Sigmoid colon (tissue), 7 donors: ENCODE measurements at regions of chr15 and their contacts with region 1.

Region 1: GRCh38 chr15:90931737-90932659 is at the start of gene HDDC3:
- DNase-seq: peak; percentile 94
- H3K4me3 ChIP-seq: peak within 1 kb of the TSS; percentile 67 to 79 (median 74)
- H3K27ac ChIP-seq: peak within 1 kb of the TSS; percentile 85 to 92 (median 90)
- H3K4me1 ChIP-seq: peaks cover 0 to 56% (median 52%) of the 10 kb centered on the region in 4 donors
- H3K27me3 ChIP-seq: no peaks in the 10 kb centered on the region
- CTCF ChIP-seq: peak in 3 of 4 experiments; percentile 80 to 93 (median 81)
- EP300 ChIP-seq: no peak
- POLR2A ChIP-seq: peak; percentile 22 to 28
- total RNA-seq, gene HDDC3: 5.2 to 10.7 (median 7.0) TPM

Region 2: DNA sequence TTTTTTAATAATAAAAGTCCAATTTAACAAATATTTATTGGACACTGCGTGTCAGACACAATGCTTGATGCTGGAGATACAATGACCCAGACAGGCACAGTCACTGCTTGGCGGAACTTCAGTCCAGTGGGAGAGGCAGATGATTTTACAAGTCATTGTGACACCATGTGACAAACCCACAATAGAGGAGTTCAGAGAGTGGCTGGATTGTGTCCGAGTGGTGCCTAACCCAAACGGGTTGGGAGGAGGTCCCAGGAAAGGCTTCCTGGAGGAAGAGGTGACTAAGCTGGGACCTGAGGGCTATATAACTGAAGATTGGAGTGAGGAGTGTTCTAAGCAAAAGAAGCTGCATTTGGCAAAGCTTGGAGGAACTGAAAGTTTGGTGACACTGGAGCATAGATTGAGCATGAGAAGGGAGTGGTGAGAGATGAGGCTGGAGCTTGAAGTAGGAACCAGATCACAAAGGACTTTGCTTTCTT is 360.9 kb before region 1 on chr15:
- intact Hi-C with region 1: no loop called
- DNase-seq: no peak
- H3K4me3 ChIP-seq: no peak overlapping the region
- H3K27ac ChIP-seq: peak overlapping the region in 2 of 4 donors; percentile 9 to 41
- H3K4me1 ChIP-seq: peaks cover 0 to 26% (median 9%) of the 10 kb centered on the region in 4 donors
- H3K27me3 ChIP-seq: no peaks in the 10 kb centered on the region
- CTCF ChIP-seq: no peak
- EP300 ChIP-seq: no peak
- POLR2A ChIP-seq: no peak

Region 3: DNA sequence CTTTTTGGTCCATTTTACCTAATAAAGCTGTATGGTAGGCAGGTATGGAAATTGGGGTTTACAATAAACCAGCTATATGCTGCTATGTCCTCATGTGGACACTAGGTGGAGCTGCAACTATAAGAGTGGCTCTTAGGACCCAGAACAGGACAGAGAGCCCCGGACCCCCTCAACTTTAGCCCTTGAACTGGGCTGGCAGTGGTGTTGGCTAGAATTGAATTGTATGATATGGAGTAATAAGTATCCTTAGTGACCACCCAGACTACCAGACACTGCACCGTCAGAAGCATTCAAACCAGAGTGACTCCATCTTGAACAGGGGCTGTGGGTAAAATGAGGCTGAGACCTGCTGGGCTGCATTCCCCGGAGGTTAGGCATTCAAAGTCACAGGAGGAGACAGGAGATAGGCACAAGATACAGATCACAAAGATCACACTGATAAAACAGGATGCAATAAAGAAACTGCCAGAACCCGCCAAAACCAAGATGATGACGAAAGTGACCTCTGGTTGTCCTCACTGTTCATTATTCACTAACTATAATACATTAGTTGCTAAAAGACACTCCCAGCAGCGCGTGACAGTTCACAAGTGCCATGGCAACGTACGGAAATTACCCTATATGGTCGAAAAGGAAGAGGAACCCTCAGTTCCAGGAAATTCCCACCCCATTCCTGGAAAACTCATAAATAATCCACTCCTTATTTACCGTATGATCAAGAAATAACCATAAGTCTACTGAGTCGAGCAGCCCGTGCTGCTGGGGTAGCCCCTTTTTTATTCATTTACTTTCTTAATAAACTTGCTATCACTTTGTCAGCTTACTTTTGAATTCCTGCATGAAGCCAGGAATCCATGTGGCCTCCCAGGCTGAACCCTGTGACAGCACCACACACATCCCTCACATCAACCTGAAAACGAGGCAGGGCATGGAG is 283.6 kb before region 1 on chr15:
- intact Hi-C with region 1: loop called (anchors 5 kb)
- DNase-seq: peak; percentile 93
- H3K4me3 ChIP-seq: no peak overlapping the region
- H3K27ac ChIP-seq: peak overlapping the region; percentile 36 to 65 (median 58)
- H3K4me1 ChIP-seq: peaks cover 0 to 9% (median 4%) of the 10 kb centered on the region in 4 donors
- H3K27me3 ChIP-seq: no peaks in the 10 kb centered on the region
- CTCF ChIP-seq: peak; percentile 81 to 92 (median 90)
- EP300 ChIP-seq: peak in 2 of 4 donors; percentile 45 to 80
- POLR2A ChIP-seq: no peak

Region 4: GRCh38 chr15:90902040-90902839 is 29.8 kb before region 1 on chr15:
- intact Hi-C with region 1: loop called (anchors 1 kb)
- DNase-seq: peak; percentile 88
- H3K4me3 ChIP-seq: peak overlapping the region; percentile 48 to 81 (median 74)
- H3K27ac ChIP-seq: peak overlapping the region; percentile 93 to 98 (median 96)
- H3K4me1 ChIP-seq: peaks cover 0 to 25% (median 21%) of the 10 kb centered on the region in 4 donors
- H3K27me3 ChIP-seq: no peaks in the 10 kb centered on the region
- CTCF ChIP-seq: peak; percentile 47 to 84 (median 76)
- EP300 ChIP-seq: no peak
- POLR2A ChIP-seq: no peak